IMR-90 (cell line): ENCODE measurements at regions of chr2 and their contacts with region 1.

Region 1: DNA sequence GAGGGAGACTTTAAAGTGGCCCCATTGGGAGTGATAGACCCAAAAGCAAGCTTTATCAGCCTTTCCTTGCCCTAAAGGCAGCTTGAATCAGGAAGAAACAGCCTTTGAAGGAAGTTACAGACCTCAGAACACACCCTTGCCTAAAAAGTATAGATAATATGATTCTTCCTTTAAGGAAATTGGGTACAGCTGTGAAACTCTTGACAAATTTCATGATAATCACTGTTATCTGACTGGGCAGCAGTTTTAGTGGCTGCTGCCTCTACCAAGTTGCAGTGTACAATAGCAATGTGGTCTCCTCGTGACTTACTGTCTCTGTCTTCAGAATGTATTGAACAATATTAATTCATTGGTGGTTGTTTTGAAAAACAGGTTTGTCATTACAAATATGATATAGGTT is 16.7 kb downstream of the HOXD1 start:
- DNase-seq: no peak
- ATAC-seq: no peak
- H3K4me3 ChIP-seq: no peak overlapping the region
- H3K27ac ChIP-seq: no peak overlapping the region
- H3K4me1 ChIP-seq: no peaks in the 10 kb centered on the region
- H3K27me3 ChIP-seq: peaks cover 2% of the 10 kb centered on the region; the same call in 1 of the 2 replicates
- CTCF ChIP-seq: no peak
- POLR2A ChIP-seq: no peak
- RAD21 ChIP-seq: no peak

Region 2: GRCh38 chr2:176237456-176237855 is 32.3 kb after region 1 on chr2:
- CTCF ChIA-PET with region 1: no interaction called
- POLR2A ChIA-PET with region 1: no interaction called
- dilution Hi-C with region 1: no loop called
- in situ Hi-C with region 1: no loop called
- intact Hi-C with region 1: loop called (anchors 2 kb)
- DNase-seq: no peak
- ATAC-seq: no peak
- H3K4me3 ChIP-seq: no peak overlapping the region
- H3K27ac ChIP-seq: no peak overlapping the region
- H3K4me1 ChIP-seq: no peaks in the 10 kb centered on the region
- H3K27me3 ChIP-seq: peaks cover 3% of the 10 kb centered on the region; the same call in 1 of the 2 replicates
- CTCF ChIP-seq: no peak
- POLR2A ChIP-seq: no peak
- RAD21 ChIP-seq: no peak